ENCODE measurements at regions of chrX and their contacts with region 1.

Region 1: GRCh38 chrX:117543885-117544284 is 572.7 kb downstream of the KLHL13 start:
- DNase-seq: no peak
- ATAC-seq: no peak
- H3K4me3 ChIP-seq: no peak overlapping the region
- H3K27ac ChIP-seq: no peak overlapping the region
- H3K4me1 ChIP-seq: no peaks in the 10 kb centered on the region
- H3K27me3 ChIP-seq: no peaks in the 10 kb centered on the region
- CTCF ChIP-seq: no peak

Region 2: DNA sequence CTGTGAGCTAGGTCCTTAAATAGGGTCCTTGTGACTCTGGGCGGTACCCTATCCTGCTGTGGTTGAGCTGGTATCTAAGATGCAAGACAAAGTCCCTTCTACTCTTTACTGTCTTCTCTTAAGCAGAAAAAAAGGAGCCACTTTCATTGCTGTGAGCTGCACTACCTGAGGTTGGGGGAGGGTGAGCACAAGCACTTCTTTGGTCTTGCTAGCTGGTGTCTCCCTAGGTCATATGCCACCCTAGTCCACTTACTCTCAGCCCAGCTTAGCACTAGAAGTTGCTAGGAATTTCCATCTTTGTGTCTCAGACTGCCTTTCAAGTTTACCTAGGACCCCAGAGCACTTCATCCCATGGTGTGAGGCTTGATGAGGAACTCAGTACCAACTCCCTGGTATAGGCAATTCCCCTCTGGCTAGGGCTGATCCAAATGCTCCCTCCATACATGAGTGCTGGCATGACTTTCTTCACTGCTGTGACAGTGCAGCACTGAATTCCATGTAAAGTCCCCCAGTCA is 737.5 kb before region 1 on chrX:
- intact Hi-C with region 1: no loop called
- DNase-seq: no peak
- ATAC-seq: no peak
- H3K4me3 ChIP-seq: no peak overlapping the region
- H3K27ac ChIP-seq: no peak overlapping the region
- H3K4me1 ChIP-seq: no peaks in the 10 kb centered on the region
- H3K27me3 ChIP-seq: peaks cover 0 to 6% (median 0%) of the 10 kb centered on the region in 7 donors
- CTCF ChIP-seq: no peak

Region 3: DNA sequence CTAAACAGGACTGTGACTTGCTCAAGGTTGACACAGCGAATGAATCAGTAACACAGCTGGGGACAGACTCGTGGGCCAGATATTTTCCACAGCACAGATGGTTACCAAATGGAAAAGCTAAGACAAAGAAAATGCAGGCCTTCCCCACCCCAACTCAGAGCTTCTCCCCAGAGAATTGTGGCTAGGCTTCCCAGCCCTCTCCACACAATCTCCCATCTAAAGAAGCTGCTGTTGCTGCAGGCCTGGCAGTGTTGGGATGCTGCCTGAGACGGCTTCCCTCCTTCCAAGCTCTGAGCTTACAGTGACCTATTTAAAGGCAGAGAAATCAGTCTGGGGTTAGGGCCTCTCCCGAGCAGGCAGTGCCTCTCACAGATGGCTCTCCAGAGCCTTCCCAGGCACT is 1645.7 kb after region 1 on chrX:
- intact Hi-C with region 1: loop called in 1 of 10 experiments (anchors 5 kb)
- DNase-seq: peak; percentile 45 to 50
- ATAC-seq: peak; percentile 85 to 89 (median 86)
- H3K4me3 ChIP-seq: no peak overlapping the region
- H3K27ac ChIP-seq: peak overlapping the region in 8 of 10 donors; percentile 20 to 69 (median 47)
- H3K4me1 ChIP-seq: peaks cover 0 to 4% (median 0%) of the 10 kb centered on the region in 9 donors
- H3K27me3 ChIP-seq: no peaks in the 10 kb centered on the region
- CTCF ChIP-seq: no peak

Measured in heart right ventricle (tissue), 16 donors.